Ascending aorta (tissue), 2 donors: ENCODE measurements at regions of chr10 and their contacts with region 1.

Region 1: DNA sequence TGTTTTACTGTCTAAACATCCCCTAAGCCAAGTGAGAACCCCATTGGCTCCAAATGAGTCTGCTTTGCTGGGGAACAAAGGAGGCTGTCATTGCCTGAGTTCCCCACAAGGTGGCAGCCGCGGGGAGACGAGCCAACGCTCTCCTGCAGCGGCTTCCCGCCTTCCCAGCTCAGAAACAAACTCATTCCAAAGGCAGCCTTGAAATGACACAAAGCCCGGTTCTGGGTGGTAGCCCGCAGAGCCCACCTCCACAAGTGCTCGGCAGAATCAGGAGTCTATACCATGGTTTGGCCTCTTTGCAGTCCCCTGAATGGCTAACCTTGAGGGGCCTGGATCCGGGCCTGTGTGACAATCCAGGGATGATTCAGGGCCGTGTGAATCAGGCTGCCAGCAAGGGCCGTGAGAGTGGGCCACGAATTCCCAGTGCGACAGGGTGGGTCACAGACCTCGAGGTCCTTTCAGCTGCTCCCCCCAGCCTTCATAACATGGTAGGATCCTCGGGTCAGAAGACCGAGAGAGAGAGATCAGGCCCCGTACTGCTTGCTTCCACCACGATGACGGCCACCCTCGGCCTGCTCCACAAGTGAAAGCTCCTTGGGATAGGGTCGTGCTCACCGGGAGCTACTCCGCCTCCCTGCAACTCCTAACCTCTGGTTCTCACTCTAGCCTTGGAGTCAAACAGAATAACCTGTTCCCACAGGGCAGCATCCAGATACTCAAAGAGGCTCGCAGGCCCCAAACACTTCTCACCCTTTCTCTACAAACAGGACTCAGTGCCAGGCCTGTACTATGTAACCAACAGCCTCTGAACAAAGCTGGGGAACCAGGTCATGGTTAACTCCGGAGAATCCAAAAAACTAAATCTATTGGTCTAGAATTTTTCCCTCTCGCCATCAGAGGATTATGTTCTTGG is 79.6 kb downstream of the DLG5 start:
- DNase-seq: peak; percentile 22 to 85
- H3K4me3 ChIP-seq: no peak overlapping the region
- H3K27ac ChIP-seq: peak overlapping the region; percentile 73 to 75
- H3K4me1 ChIP-seq: peaks cover 0 to 8% of the 10 kb centered on the region in 2 donors
- H3K27me3 ChIP-seq: no peaks in the 10 kb centered on the region
- CTCF ChIP-seq: peak; percentile 89 to 98 (median 96)

Region 2: DNA sequence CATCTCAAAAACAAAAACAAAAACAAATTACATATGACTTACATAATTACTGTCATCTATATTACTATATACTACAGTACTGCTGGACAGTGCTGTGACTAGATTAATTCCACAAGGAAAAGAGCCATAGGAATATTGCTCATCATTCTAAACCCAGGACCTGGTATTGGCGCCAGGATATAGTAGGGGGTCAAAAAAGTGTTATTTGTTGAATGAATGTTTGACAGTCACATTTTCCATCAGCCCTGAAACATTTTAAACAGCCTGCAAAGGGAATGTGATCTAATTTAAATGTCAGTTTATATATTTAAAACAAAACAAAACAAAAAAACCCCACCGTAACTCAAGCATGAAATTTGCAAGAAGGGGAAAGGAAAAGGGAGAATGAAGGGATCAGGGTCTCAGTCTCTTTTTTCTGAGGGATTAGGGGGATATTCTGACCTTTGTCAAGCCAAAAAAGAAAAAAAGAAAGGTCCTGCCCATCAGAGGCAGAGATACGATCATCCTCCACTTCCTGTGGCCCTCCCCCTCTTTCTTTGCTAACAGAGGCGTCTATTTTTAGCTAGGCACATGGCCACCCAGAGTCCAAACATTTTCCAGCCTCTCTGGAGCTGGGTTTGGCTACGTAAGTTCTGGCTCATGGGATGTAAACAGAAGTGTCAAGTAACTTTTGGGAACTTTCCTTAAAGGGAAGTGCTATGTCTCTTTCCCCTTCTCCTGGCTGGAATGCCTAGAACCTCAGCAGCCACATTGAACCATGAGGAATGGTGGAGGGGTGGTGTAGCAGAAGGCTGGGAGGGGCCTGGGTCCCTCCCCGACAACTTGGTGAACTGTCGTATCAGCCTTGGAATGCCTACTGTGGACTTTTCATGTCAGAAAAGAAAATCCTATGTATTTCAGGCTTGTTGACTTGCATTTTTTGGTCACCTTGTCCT is 124.2 kb after region 1 on chr10:
- intact Hi-C with region 1: loop called (anchors 2 kb)
- DNase-seq: peak; percentile 61 to 91
- H3K4me3 ChIP-seq: peak overlapping the region; percentile 27
- H3K27ac ChIP-seq: peak overlapping the region; percentile 84 to 89
- H3K4me1 ChIP-seq: peaks cover 0 to 32% of the 10 kb centered on the region in 2 donors
- H3K27me3 ChIP-seq: no peaks in the 10 kb centered on the region
- CTCF ChIP-seq: no peak

Region 3: DNA sequence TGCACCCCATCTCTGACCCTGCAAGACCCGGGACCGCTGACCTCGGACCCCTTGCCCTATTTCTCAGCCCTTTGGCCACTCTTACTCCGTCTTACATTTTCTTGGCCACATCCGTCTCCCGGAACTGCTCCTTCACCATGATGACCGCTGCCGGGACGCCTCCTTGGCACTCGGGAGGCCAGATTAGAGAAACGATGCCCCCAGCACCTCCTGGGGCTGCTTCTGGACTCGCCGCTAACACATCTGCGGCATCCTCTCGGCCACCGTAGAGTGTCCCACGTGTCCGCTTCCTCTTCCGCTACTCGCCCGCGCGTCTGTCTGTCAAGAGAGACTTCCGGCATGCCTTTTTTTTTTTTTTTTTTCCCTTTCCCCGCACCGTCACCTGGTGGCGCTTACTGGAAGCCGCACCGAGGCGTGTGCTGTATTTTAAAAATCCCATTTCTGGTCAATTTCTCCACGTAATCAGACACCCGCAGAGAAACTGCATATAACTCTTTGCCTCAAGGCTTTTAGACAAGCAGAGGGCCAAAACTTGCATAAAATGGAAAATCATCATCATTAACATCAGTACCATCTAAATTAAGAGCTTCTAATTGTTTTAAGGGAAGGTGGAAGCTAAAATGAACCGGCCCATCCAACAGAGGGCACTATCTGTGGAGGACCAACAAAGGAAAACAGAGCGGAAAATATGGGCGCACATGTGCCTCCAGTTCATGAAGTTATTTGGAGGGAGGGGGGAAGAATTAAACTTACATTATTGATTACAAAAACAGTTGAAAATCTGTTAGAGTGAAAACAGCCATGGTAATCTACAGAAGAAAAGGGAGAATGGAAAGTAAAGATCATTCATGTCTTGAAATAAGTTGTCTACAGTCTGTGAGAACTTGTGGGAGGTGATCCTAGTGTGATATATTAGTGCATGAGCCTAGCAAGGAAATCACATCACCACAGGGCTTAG is 182.6 kb after region 1 on chr10 and contains the start of gene POLR3A:
- intact Hi-C with region 1: loop called (anchors 1 kb)
- DNase-seq: peak; percentile 82 to 98
- H3K4me3 ChIP-seq: peak within 1 kb of the TSS; percentile 96
- H3K27ac ChIP-seq: peak within 1 kb of the TSS; percentile 73 to 82
- H3K4me1 ChIP-seq: peaks cover 9 to 15% of the 10 kb centered on the region in 2 donors
- H3K27me3 ChIP-seq: no peaks in the 10 kb centered on the region
- CTCF ChIP-seq: peak; percentile 58 to 79 (median 69)
- total RNA-seq, gene POLR3A: 18.6 TPM